ENCODE measurements at regions of chr11 and their contacts with region 1.

Region 1: GRCh38 chr11:61899146-61899841 is 7.9 kb upstream of the FADS3 start:
- DNase-seq: peak; percentile 98
- ATAC-seq: peak; percentile 80
- H3K4me3 Mint-ChIP-seq: no peak overlapping the region
- H3K27ac Mint-ChIP-seq: no peak overlapping the region
- H3K4me1 Mint-ChIP-seq: peaks cover 20% of the 10 kb centered on the region
- H3K27me3 Mint-ChIP-seq: no peaks in the 10 kb centered on the region
- CTCF ChIP-seq: peak; percentile 100

Region 2: GRCh38 chr11:61756452-61757212 is 142.7 kb before region 1 on chr11:
- CTCF ChIA-PET with region 1: no interaction called
- POLR2A ChIA-PET with region 1: no interaction called
- DNase-seq: no peak
- ATAC-seq: no peak
- H3K4me3 Mint-ChIP-seq: no peak overlapping the region
- H3K27ac Mint-ChIP-seq: no peak overlapping the region
- H3K4me1 Mint-ChIP-seq: peaks cover 22% of the 10 kb centered on the region
- H3K27me3 Mint-ChIP-seq: peaks cover 24% of the 10 kb centered on the region
- CTCF ChIP-seq: no peak

Region 3: GRCh38 chr11:61860054-61860903 is 39.0 kb before region 1 on chr11:
- CTCF ChIA-PET with region 1: no interaction called
- POLR2A ChIA-PET with region 1: no interaction called
- DNase-seq: no peak
- ATAC-seq: no peak
- H3K4me3 Mint-ChIP-seq: no peak overlapping the region
- H3K27ac Mint-ChIP-seq: no peak overlapping the region
- H3K4me1 Mint-ChIP-seq: no peaks in the 10 kb centered on the region
- H3K27me3 Mint-ChIP-seq: no peaks in the 10 kb centered on the region
- CTCF ChIP-seq: no peak

Region 4: DNA sequence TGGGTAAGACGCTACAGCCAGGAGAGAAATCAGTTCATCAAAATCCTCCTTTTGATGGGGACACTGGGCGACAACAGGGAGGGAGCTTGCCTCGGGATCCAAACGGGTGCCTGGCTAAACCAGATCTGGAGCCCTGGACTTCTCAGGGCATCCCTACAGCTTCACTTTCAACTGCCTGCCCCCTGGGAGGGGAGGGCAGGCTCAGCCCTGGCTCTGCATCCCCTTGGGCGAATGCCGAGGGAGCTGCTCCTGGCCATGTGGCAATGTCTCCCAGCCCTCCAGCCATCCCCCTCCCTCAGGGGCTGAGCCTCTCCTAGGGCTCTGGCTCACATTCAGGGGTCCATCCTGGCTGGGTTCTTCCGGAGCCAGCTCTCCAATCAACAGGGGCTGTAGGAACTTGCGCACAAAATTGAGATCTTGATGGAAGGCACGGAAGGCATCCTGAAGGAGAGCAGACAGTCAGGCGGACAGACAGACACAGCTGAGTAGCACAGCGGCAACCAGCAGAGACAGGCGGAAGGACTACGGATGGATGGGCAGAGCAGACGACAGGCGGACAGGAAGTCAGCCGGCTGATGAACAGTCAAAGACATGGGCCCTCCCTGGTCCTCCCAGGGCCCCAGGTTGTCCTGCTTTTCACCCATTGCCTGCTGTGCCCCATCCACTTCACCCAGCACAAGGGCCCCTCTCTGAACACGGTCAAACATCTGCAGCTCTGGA is 19.4 kb before region 1 on chr11:
- CTCF ChIA-PET with region 1: interaction called, 118 read pairs
- POLR2A ChIA-PET with region 1: no interaction called
- DNase-seq: no peak
- ATAC-seq: no peak
- H3K4me3 Mint-ChIP-seq: no peak overlapping the region
- H3K27ac Mint-ChIP-seq: peak overlapping the region; percentile 21
- H3K4me1 Mint-ChIP-seq: peaks cover 32% of the 10 kb centered on the region
- H3K27me3 Mint-ChIP-seq: no peaks in the 10 kb centered on the region; the same call in 1 of the 2 replicates
- CTCF ChIP-seq: no peak

Region 5: DNA sequence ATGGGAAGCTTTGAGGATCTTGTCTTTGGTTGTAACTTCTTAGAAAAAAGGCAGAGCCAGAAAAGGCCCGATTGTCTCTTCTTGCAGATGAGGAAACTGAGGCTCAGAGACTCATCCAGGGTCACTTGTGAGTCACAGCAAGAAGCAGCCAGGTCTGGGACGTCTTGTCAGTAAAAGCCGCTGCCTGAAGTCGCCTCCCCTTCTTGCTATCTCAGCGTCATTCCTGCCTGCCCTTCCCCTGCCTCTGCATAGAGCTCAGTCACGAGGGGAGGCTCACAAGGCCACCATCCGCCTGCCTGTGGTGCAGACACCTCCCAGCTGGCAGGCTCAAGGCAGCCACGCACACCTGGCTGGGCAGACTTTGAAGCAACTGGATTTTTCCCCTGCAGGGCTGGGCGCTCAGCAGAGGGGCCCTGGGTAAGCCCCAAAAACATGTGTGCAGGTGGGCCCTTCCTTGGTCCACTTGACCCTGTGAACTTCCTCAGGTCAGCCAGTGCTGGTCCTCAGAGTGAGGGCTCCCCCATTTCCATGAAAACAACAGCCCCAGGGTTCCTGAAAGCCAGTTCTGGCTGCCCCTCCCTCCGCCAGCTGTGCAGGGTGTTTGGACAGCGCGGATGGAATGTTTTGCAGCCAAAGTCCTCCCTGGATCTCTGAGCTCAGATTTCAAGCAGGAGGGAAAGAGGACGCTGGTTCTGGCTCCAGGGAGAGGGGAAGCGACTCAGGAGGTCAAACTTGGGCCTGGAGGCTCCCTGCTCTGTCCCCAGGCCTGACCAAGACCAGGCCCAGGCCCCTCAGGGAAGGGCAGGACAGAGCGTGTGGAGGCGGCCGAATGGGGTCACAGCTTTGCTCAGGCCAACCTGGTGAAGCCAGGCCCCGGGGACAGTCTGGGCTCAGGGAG is 24.1 kb after region 1 on chr11:
- CTCF ChIA-PET with region 1: interaction called, 95 read pairs
- POLR2A ChIA-PET with region 1: no interaction called
- DNase-seq: peak; percentile 69
- ATAC-seq: peak; percentile 67
- H3K4me3 Mint-ChIP-seq: peak overlapping the region; percentile 41
- H3K27ac Mint-ChIP-seq: peak overlapping the region; percentile 94
- H3K4me1 Mint-ChIP-seq: peaks cover 42% of the 10 kb centered on the region
- H3K27me3 Mint-ChIP-seq: peaks cover 11% of the 10 kb centered on the region
- CTCF ChIP-seq: no peak

Region 6: DNA sequence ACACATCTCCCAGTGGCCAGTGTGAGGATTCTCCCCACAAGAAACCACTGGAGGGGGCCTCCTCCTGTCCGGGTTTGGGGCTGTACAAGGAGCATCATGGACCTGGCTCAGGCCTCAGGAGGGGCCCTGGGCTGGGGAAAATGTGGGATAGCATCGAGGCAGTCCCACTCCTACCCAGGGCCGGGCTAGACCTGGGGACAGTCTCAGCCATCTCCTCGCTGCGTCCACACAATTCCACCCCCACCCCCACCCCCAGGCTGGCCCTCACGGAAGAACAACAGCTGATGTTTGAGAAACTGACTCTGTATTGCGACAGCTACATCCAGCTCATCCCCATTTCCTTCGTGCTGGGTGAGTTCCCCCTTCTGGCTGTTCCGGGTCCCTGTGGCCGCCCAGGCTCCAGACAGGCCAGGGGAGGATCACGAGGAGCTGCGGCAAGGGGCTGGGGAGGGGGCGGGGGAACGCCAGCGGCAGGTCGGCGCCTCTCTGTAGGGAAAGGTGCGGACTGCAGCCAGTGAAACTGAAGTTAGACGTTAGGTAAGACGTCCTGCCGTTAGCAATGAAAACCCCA is 55.6 kb after region 1 on chr11:
- CTCF ChIA-PET with region 1: interaction called, 685 read pairs
- POLR2A ChIA-PET with region 1: interaction called, 26 read pairs
- DNase-seq: peak; percentile 65
- ATAC-seq: peak; percentile 54
- H3K4me3 Mint-ChIP-seq: peak overlapping the region; percentile 56
- H3K27ac Mint-ChIP-seq: no peak overlapping the region
- H3K4me1 Mint-ChIP-seq: peaks cover 5% of the 10 kb centered on the region; the same call in 1 of the 2 replicates
- H3K27me3 Mint-ChIP-seq: peaks cover 26% of the 10 kb centered on the region
- CTCF ChIP-seq: no peak

Region 7: GRCh38 chr11:61980783-61981541 is 81.7 kb after region 1 on chr11:
- CTCF ChIA-PET with region 1: interaction called, 16 read pairs
- POLR2A ChIA-PET with region 1: no interaction called
- DNase-seq: no peak
- ATAC-seq: peak; percentile 25; the same call in 1 of the 2 replicates
- H3K4me3 Mint-ChIP-seq: no peak overlapping the region
- H3K27ac Mint-ChIP-seq: 0 out of 2 replicates have a peak overlapping the region, but pooled peaks have one; percentile 10
- H3K4me1 Mint-ChIP-seq: peaks cover 20% of the 10 kb centered on the region
- H3K27me3 Mint-ChIP-seq: peaks cover 54% of the 10 kb centered on the region
- CTCF ChIP-seq: no peak

Region 8: GRCh38 chr11:62061351-62062222 is 162.3 kb after region 1 on chr11:
- CTCF ChIA-PET with region 1: interaction called, 11 read pairs
- POLR2A ChIA-PET with region 1: no interaction called
- DNase-seq: no peak
- ATAC-seq: no peak
- H3K4me3 Mint-ChIP-seq: no peak overlapping the region
- H3K27ac Mint-ChIP-seq: peak overlapping the region; percentile 23; the same call in 1 of the 2 replicates
- H3K4me1 Mint-ChIP-seq: 0 out of 2 replicates have a peak, but pooled peaks cover 6% of the 10 kb centered on the region
- H3K27me3 Mint-ChIP-seq: no peaks in the 10 kb centered on the region; the same call in 1 of the 2 replicates
- CTCF ChIP-seq: no peak